ENCODE measurements at regions of chr12 and their contacts with region 1.

Region 1: GRCh38 chr12:66144791-66145754 is 14.5 kb upstream of the LLPH start:
- DNase-seq: no peak

Region 2: DNA sequence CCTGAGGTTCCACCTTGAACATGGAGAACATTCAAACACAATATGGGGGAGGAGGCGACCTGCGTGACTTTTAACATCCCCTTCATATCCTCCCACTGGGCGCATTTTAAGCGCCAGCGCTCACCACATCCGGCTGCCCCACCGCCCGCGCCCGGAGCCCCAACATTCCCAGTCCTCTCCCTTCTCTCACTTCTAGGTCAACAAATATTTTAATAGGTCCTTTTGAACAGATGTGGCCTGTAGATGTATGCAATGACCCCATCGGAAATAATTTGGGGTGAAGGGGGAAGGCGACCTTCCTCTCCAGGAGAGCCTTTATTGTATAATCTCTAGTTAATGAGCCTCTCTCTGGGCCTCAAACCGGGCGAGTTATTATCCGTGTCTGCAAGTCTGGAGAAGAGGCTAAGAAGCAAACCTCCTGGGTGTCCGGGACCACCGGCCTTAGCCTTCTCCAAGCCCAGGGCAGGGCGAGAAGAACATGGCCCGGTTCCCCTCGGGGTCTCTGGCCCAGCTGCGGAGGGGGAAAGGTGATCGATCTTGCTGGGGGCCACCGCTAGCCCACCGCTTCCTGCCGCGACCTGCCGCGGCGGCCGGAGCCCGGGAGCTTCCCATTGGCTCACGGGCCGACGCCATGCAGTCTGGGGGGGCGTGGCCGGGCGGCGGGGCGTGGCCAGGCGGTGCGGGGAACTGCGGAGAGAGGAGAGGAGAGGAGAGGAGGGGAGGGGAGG is 404.0 kb before region 1 on chr12:
- intact Hi-C with region 1: no loop called
- DNase-seq: peak; percentile 90

Region 3: GRCh38 chr12:66301944-66302826 is 157.1 kb after region 1 on chr12 and contains the start of gene HELB:
- intact Hi-C with region 1: loop called (anchors 10 kb)
- DNase-seq: peak; percentile 99
- total RNA-seq, gene HELB: 1.6 TPM

Region 4: GRCh38 chr12:66409195-66409871 is 264.3 kb after region 1 on chr12:
- intact Hi-C with region 1: loop called (anchors 10 kb)
- DNase-seq: no peak

Region 5: DNA sequence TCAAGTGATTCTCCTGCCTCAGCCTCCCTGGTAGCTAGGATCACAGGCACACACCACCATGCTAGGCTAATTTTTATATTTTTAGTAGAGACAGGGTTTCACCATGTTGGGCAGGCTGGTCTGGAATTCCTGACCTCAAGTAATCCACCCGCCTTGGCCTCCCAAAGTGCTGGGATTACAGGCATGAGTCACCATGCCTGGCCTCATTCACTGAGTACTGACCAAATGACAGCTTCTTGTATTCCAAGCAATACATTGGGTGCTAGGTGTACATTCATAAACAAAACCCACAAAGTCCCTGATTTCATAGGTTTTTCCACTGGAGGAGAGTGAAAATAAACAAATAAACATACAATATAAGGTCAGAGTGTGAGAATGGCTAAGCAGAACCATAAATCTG is 293.5 kb after region 1 on chr12:
- intact Hi-C with region 1: no loop called
- DNase-seq: no peak